CD4-positive, alpha-beta memory T cell (primary cell): ENCODE measurements at regions of chr2 and their contacts with region 1.

Region 1: GRCh38 chr2:160324161-160324800 is 124.2 kb upstream of the ITGB6 start:
- DNase-seq: peak in 4 of 5 donors; percentile 21 to 36 (median 28)
- H3K4me3 ChIP-seq: no peak overlapping the region
- H3K4me3 Mint-ChIP-seq: peak overlapping the region in 3 of 8 donors; percentile 8 to 32 (median 18)
- H3K27ac ChIP-seq: no peak overlapping the region
- H3K27ac Mint-ChIP-seq: peak overlapping the region in 2 of 7 donors; percentile 33 to 51
- H3K4me1 ChIP-seq: peaks cover 66% of the 10 kb centered on the region
- H3K4me1 Mint-ChIP-seq: peaks cover 63 to 95% (median 82%) of the 10 kb centered on the region in 4 donors
- H3K27me3 ChIP-seq: no peaks in the 10 kb centered on the region
- H3K27me3 Mint-ChIP-seq: no peaks in the 10 kb centered on the region

Region 2: GRCh38 chr2:160252278-160252887 is 71.9 kb before region 1 on chr2:
- CTCF ChIA-PET with region 1: interaction called, 10 read pairs
- POLR2A ChIA-PET with region 1: no interaction called
- intact Hi-C with region 1: no loop called
- DNase-seq: peak in 1 of 5 donors; percentile 17
- H3K4me3 ChIP-seq: no peak overlapping the region
- H3K4me3 Mint-ChIP-seq: no peak overlapping the region
- H3K27ac ChIP-seq: no peak overlapping the region
- H3K27ac Mint-ChIP-seq: no peak overlapping the region
- H3K4me1 ChIP-seq: no peaks in the 10 kb centered on the region
- H3K4me1 Mint-ChIP-seq: peaks cover 0 to 5% (median 0%) of the 10 kb centered on the region in 4 donors
- H3K27me3 ChIP-seq: no peaks in the 10 kb centered on the region
- H3K27me3 Mint-ChIP-seq: no peaks in the 10 kb centered on the region

Region 3: GRCh38 chr2:160345071-160345764 is 20.9 kb after region 1 on chr2:
- CTCF ChIA-PET with region 1: interaction called, 15 read pairs
- POLR2A ChIA-PET with region 1: no interaction called
- intact Hi-C with region 1: no loop called
- DNase-seq: no peak
- H3K4me3 ChIP-seq: no peak overlapping the region
- H3K4me3 Mint-ChIP-seq: peak overlapping the region in 6 of 8 donors; percentile 4 to 77 (median 72)
- H3K27ac ChIP-seq: no peak overlapping the region
- H3K27ac Mint-ChIP-seq: peak overlapping the region; percentile 30 to 73 (median 47)
- H3K4me1 ChIP-seq: peaks cover 77% of the 10 kb centered on the region
- H3K4me1 Mint-ChIP-seq: peaks cover 54 to 94% (median 82%) of the 10 kb centered on the region in 4 donors
- H3K27me3 ChIP-seq: no peaks in the 10 kb centered on the region
- H3K27me3 Mint-ChIP-seq: no peaks in the 10 kb centered on the region

Region 4: DNA sequence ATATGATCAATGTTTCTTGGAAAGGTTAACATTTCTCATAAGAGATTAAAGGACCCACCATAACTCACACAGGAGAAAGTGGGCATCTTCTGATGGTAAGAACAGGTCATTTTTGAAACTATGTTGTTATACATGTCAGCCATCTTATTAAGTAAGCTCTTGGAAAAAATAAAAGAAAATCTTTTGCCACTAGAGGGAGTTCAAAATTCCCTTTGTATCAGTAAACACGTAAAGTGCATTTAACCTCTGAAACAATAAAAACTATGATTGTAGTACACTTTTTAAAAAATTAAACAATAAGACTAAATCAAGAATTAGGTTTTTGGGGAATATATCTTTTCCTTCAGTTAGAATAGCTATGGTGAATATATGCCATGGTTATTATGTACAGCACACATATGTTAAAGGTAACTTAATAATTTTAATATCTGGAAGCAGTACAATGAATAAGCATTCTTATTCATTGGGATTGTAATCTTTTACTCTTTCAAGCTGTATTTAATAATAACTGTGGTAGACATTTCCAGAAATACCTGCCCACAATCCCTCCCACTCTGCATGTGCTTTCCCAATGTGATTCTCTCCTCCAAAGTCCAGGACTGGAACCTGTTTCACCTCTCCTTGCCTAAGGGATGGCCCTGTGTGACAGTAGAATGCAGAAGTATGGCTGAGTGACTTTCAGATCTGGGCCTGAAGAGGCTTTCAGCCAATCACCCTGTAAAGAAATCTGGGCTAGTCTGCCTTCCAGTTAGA is 105.1 kb after region 1 on chr2:
- CTCF ChIA-PET with region 1: interaction called, 19 read pairs
- POLR2A ChIA-PET with region 1: no interaction called
- intact Hi-C with region 1: loop called (anchors 2 kb)
- DNase-seq: peak in 4 of 5 donors; percentile 54 to 65 (median 60)
- H3K4me3 ChIP-seq: no peak overlapping the region
- H3K4me3 Mint-ChIP-seq: peak overlapping the region in 2 of 8 donors; percentile 28 to 56
- H3K27ac ChIP-seq: peak overlapping the region; percentile 17
- H3K27ac Mint-ChIP-seq: peak overlapping the region; percentile 77 to 92 (median 87)
- H3K4me1 ChIP-seq: peaks cover 58% of the 10 kb centered on the region
- H3K4me1 Mint-ChIP-seq: peaks cover 40 to 79% (median 59%) of the 10 kb centered on the region in 4 donors
- H3K27me3 ChIP-seq: no peaks in the 10 kb centered on the region
- H3K27me3 Mint-ChIP-seq: no peaks in the 10 kb centered on the region

Region 5: DNA sequence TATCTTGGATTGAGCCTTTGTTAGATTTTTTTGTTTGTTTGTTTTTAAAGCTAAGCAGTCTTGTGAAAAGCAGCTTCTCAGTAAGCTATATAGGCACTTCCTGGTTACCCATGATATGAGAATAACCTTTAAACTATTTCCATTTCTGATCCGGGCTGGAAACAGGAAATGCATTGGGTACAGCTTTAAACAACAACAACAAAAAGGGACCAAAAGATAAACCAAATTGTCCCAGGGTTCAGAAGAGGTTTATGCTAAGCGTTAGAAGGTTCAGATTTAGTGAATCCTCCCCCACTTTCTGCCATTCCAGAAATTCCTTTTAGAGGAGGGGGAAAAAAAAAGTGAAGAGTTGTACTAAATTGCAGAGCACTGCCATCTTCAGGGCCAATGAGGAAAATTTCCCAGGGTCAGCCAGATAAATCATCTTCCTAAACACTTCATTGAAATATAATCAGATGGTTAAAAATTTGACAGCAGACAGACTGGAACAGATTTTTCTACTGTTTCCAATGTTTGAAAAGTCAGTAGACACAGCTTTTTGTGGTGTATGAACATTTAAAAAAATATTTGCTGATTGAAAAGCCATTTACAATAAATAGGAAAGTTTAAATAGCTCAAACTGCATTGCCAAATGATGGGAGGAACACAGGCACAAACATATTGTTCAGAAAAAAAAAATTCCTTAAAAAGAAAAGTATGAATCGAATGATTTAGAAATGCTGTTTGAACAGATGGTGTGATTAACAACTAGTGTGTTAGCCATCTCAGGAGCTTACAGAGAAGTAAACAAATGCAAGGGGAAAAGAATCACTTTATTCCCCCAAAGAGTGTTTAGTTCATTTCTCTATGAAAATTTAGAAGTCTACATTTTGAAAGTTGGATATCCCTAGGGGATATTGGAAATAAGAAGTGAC is 646.0 kb after region 1 on chr2:
- CTCF ChIA-PET with region 1: interaction called, 63 read pairs
- POLR2A ChIA-PET with region 1: no interaction called
- intact Hi-C with region 1: loop called (anchors 1 kb)
- DNase-seq: peak in 4 of 5 donors; percentile 15 to 26 (median 20)
- H3K4me3 ChIP-seq: no peak overlapping the region
- H3K4me3 Mint-ChIP-seq: peak overlapping the region in 1 of 8 donors; percentile 26
- H3K27ac ChIP-seq: no peak overlapping the region
- H3K27ac Mint-ChIP-seq: peak overlapping the region in 2 of 7 donors; percentile 7 to 10
- H3K4me1 ChIP-seq: no peaks in the 10 kb centered on the region
- H3K4me1 Mint-ChIP-seq: peaks cover 1 to 4% (median 3%) of the 10 kb centered on the region in 4 donors
- H3K27me3 ChIP-seq: no peaks in the 10 kb centered on the region
- H3K27me3 Mint-ChIP-seq: peaks cover 0 to 1% of the 10 kb centered on the region in 2 donors